Aorta (tissue), 5 donors: ENCODE measurements at regions of chr17 and their contacts with region 1.

Region 1: GRCh38 chr17:73278465-73279453 is 17.1 kb upstream of the CPSF4L start:
- DNase-seq: no peak
- ATAC-seq: peak; percentile 24
- H3K4me3 ChIP-seq: no peak overlapping the region
- H3K27ac ChIP-seq: no peak overlapping the region
- H3K4me1 ChIP-seq: peaks cover 0 to 3% of the 10 kb centered on the region in 2 donors
- H3K27me3 ChIP-seq: no peaks in the 10 kb centered on the region

Region 2: GRCh38 chr17:73349138-73349537 is 70.4 kb after region 1 on chr17:
- intact Hi-C with region 1: loop called in 1 of 2 experiments (anchors 5 kb)
- DNase-seq: no peak
- ATAC-seq: peak; percentile 48
- H3K4me3 ChIP-seq: no peak overlapping the region
- H3K27ac ChIP-seq: no peak overlapping the region
- H3K4me1 ChIP-seq: no peaks in the 10 kb centered on the region
- H3K27me3 ChIP-seq: no peaks in the 10 kb centered on the region